Thyroid gland (tissue), 4 donors: ENCODE measurements at regions of chr9 and their contacts with region 1.

Region 1: GRCh38 chr9:133238851-133239532 is 29.9 kb upstream of the OBP2B start:
- DNase-seq: peak; percentile 84 to 88
- H3K4me3 ChIP-seq: no peak overlapping the region
- H3K27ac ChIP-seq: peak overlapping the region; percentile 79 to 89 (median 89)
- H3K4me1 ChIP-seq: peaks cover 24 to 50% of the 10 kb centered on the region in 2 donors
- H3K27me3 ChIP-seq: no peaks in the 10 kb centered on the region
- CTCF ChIP-seq: peak; percentile 41 to 87 (median 81)
- POLR2A ChIP-seq: peak in 1 of 2 donors; percentile 30

Region 2: DNA sequence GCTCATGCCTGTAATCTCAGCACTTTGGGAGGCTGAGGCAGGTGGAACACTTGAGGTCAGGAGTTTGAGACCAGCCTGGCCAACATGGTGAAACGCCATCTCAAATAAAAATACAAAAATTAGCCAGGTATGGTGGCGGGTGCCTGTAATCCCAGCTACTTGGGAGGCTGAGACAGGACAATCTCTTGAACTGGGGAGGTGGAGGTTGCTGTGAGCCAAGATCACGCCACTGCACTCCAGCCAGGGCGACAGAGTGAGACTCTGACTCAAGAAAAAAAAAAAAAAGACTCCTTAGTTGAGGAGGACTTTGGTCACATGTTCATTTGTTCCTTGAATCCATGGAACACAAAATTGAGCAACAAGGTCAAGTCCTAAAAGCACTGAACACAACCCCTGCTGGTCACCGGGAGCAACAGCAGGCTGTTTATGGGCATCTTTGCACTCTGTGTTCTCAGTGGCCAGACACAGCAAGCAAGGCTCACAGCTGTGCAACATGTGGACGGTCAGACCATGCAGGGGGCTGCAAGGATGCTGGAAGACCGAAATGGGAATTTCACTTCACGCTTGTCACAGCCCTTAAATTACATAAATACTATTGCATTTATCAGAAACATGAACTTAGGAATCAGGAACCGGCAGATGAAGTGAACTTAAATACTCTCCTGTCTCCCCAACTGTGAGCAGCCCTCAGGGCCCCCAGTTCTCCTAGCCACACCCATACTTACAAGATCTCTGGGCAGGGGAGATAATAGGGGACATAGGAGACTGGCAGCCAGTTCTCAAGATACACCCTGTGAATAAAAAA is 78.0 kb before region 1 on chr9:
- intact Hi-C with region 1: no loop called
- DNase-seq: peak; percentile 64 to 72
- H3K4me3 ChIP-seq: no peak overlapping the region
- H3K27ac ChIP-seq: peak overlapping the region; percentile 33 to 48 (median 41)
- H3K4me1 ChIP-seq: peaks cover 15 to 27% of the 10 kb centered on the region in 2 donors
- H3K27me3 ChIP-seq: no peaks in the 10 kb centered on the region
- CTCF ChIP-seq: peak; percentile 44 to 72 (median 64)
- POLR2A ChIP-seq: no peak

Region 3: GRCh38 chr9:133275105-133276000 is 36.4 kb after region 1 on chr9 and contains the start of gene ABO:
- intact Hi-C with region 1: loop called (anchors 5 kb)
- DNase-seq: peak; percentile 61 to 67
- H3K4me3 ChIP-seq: peak within 1 kb of the TSS; percentile 41 to 79 (median 68)
- H3K27ac ChIP-seq: peak within 1 kb of the TSS; percentile 81 to 96 (median 94)
- H3K4me1 ChIP-seq: peaks cover 11 to 16% of the 10 kb centered on the region in 2 donors
- H3K27me3 ChIP-seq: no peaks in the 10 kb centered on the region
- CTCF ChIP-seq: peak in 3 of 6 experiments; percentile 56 to 67 (median 61)
- POLR2A ChIP-seq: peak in 1 of 2 donors; percentile 58
- total RNA-seq, gene ABO: 15.7 to 32.6 (median 24.9) TPM

Region 4: GRCh38 chr9:133509179-133510079 is 270.4 kb after region 1 on chr9:
- intact Hi-C with region 1: no loop called
- DNase-seq: peak; percentile 62 to 67
- H3K4me3 ChIP-seq: no peak overlapping the region
- H3K27ac ChIP-seq: peak overlapping the region in 1 of 3 donors; percentile 7
- H3K4me1 ChIP-seq: peaks cover 13 to 26% of the 10 kb centered on the region in 2 donors
- H3K27me3 ChIP-seq: no peaks in the 10 kb centered on the region
- CTCF ChIP-seq: no peak
- POLR2A ChIP-seq: no peak